ENCODE measurements at regions of chr2 and their contacts with region 1.

Region 1: DNA sequence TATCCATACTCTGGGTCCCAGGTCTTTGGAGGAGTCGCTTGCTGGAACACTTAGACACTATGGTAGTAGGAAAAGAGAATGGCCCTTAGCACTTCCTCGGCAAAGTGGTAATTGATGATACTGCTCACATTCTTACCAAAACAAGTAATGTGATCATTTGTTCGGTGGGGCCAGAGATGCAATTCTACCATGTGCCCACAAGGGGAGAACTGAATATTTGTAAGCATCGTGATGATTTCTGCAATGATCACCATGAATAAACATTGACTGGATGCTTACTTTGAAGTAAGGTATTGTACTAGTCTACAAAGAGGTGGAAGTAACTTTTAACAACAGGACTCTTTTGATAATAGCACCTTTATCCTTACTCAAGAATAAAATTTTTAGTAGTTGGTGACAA is 109.7 kb downstream of the CD8B2 start:
- DNase-seq: no peak
- H3K4me3 ChIP-seq: no peak overlapping the region
- H3K27ac ChIP-seq: no peak overlapping the region
- H3K4me1 ChIP-seq: no peaks in the 10 kb centered on the region
- H3K27me3 ChIP-seq: no peaks in the 10 kb centered on the region
- CTCF ChIP-seq: peak in 2 of 5 experiments; percentile 9 to 37
- EP300 ChIP-seq: no peak
- POLR2A ChIP-seq: no peak

Region 2: GRCh38 chr2:105087273-105087672 is 1509.6 kb before region 1 on chr2:
- in situ Hi-C with region 1: no loop called
- intact Hi-C with region 1: loop called (anchors 5 kb)
- DNase-seq: no peak
- H3K4me3 ChIP-seq: no peak overlapping the region
- H3K27ac ChIP-seq: no peak overlapping the region
- H3K4me1 ChIP-seq: no peaks in the 10 kb centered on the region
- H3K27me3 ChIP-seq: no peaks in the 10 kb centered on the region
- CTCF ChIP-seq: no peak
- EP300 ChIP-seq: no peak
- POLR2A ChIP-seq: no peak

Region 3: GRCh38 chr2:106306387-106306786 is 290.5 kb before region 1 on chr2:
- in situ Hi-C with region 1: no loop called
- intact Hi-C with region 1: no loop called
- DNase-seq: no peak
- H3K4me3 ChIP-seq: no peak overlapping the region
- H3K27ac ChIP-seq: no peak overlapping the region
- H3K4me1 ChIP-seq: no peaks in the 10 kb centered on the region
- H3K27me3 ChIP-seq: no peaks in the 10 kb centered on the region
- CTCF ChIP-seq: no peak
- EP300 ChIP-seq: no peak
- POLR2A ChIP-seq: no peak

Region 4: GRCh38 chr2:106649306-106649705 is 52.5 kb after region 1 on chr2:
- in situ Hi-C with region 1: no loop called
- intact Hi-C with region 1: no loop called
- DNase-seq: no peak
- H3K4me3 ChIP-seq: no peak overlapping the region
- H3K27ac ChIP-seq: no peak overlapping the region
- H3K4me1 ChIP-seq: no peaks in the 10 kb centered on the region
- H3K27me3 ChIP-seq: no peaks in the 10 kb centered on the region
- CTCF ChIP-seq: no peak
- EP300 ChIP-seq: no peak
- POLR2A ChIP-seq: no peak

Measured in transverse colon (tissue), 4 donors.